ENCODE measurements at regions of chr1 and their contacts with region 1.

Region 1: DNA sequence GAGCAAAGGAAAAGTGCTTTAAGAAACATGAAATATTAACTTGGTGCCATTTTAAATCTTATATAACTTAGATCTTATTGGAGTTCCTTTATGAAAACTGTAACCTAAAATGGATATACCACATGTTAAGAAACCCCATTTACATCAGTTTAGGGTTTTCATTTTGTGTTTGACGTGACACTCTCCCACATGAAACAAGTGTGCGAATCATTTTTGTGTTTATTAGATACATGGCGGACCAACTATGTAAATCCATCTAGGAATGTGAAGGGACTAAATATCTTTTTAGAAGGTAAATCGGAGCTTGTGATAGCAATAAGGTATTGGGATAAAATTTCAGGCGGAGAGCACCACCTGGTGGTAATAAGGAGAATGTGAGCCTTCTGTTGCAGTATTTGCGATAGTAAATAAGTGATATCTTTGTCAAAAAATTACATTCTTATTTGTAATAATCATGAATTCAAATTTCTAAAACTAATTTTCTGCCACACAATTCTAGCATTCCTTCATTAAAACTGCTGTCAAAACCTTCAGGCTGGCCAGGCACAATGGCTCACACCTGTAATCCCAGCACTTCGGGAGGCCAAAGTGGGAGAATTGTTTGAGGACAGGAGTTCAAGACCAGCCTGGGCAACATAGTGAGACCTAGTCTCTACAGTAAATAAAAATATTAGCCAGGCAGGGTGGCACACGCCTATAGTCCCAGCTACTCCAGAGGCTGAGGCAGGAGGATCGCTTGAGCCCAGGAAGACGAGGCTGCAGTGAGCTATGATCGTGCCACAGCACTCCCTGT is 31.3 kb downstream of the SMAP2 start:
- DNase-seq: peak in 1 of 2 donors; percentile 88
- ATAC-seq: peak; percentile 78 to 79 (median 79)
- H3K4me3 ChIP-seq: no peak overlapping the region
- H3K4me3 Mint-ChIP-seq: peak overlapping the region; percentile 55
- H3K27ac ChIP-seq: peak overlapping the region; percentile 23
- H3K27ac Mint-ChIP-seq: peak overlapping the region; percentile 84 to 89
- H3K4me1 ChIP-seq: peaks cover 41% of the 10 kb centered on the region
- H3K4me1 Mint-ChIP-seq: peaks cover 30 to 31% of the 10 kb centered on the region in 2 donors
- H3K27me3 ChIP-seq: no peaks in the 10 kb centered on the region
- H3K27me3 Mint-ChIP-seq: no peaks in the 10 kb centered on the region
- CTCF ChIP-seq: peak; percentile 92

Region 2: DNA sequence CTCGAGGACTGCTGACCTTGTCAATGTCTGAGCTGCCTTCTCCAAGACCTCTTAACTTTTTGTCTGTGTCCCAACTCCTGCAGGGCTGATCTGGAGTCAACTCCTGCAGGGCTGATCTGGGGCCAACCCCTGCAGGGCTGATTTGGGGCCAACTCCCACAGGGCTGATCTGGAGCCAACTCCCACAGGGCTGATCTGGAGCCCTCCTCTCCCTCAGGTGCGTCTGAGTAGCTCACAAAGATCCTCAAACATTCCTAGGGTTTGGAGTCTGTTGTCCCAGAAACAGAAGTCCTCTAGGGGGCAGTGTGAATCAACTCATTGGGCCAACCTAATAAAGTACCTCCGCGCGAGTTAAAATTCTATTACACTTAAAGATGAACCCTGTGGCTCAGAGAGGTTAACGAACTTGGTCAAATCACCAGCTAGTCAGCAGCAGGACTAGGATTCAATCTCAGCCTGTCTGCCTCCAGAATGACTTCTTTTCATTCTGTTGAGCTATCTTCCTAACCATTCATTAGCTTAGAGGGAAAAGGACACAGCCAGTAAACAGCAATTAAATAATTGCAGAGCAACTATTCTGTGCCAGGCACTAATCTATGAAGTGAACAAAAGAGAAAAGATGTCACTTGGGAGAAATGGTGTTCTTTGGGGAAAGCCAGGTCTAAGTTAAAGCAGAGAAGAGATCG is 260.8 kb before region 1 on chr1:
- intact Hi-C with region 1: loop called (anchors 2 kb)
- DNase-seq: peak in 1 of 2 donors; percentile 85
- ATAC-seq: peak; percentile 75 to 84 (median 82)
- H3K4me3 ChIP-seq: no peak overlapping the region
- H3K4me3 Mint-ChIP-seq: no peak overlapping the region
- H3K27ac ChIP-seq: no peak overlapping the region
- H3K27ac Mint-ChIP-seq: no peak overlapping the region
- H3K4me1 ChIP-seq: no peaks in the 10 kb centered on the region
- H3K4me1 Mint-ChIP-seq: peaks cover 4 to 6% of the 10 kb centered on the region in 2 donors
- H3K27me3 ChIP-seq: peaks cover 2% of the 10 kb centered on the region
- H3K27me3 Mint-ChIP-seq: peaks cover 35 to 50% of the 10 kb centered on the region in 2 donors
- CTCF ChIP-seq: peak; percentile 79

Region 3: GRCh38 chr1:40257688-40258444 is 147.0 kb before region 1 on chr1 and contains the start of gene ZMPSTE24:
- intact Hi-C with region 1: loop called (anchors 5 kb)
- DNase-seq: peak; percentile 90 to 98
- ATAC-seq: peak; percentile 95 to 99 (median 95)
- H3K4me3 ChIP-seq: peak within 1 kb of the TSS; percentile 99
- H3K4me3 Mint-ChIP-seq: peak within 1 kb of the TSS; percentile 98
- H3K27ac ChIP-seq: peak within 1 kb of the TSS; percentile 86
- H3K27ac Mint-ChIP-seq: peak within 1 kb of the TSS; percentile 98 to 100
- H3K4me1 ChIP-seq: peaks cover 19% of the 10 kb centered on the region
- H3K4me1 Mint-ChIP-seq: peaks cover 23 to 27% of the 10 kb centered on the region in 2 donors
- H3K27me3 ChIP-seq: no peaks in the 10 kb centered on the region
- H3K27me3 Mint-ChIP-seq: no peaks in the 10 kb centered on the region
- CTCF ChIP-seq: no peak
- total RNA-seq, gene ZMPSTE24: 15.3 to 19.5 (median 19.3) TPM

Region 4: GRCh38 chr1:40373338-40374283 is 31.3 kb before region 1 on chr1 and contains the start of gene SMAP2:
- intact Hi-C with region 1: loop called (anchors 5 kb)
- DNase-seq: peak; percentile 91 to 98
- ATAC-seq: peak; percentile 85 to 95 (median 91)
- H3K4me3 ChIP-seq: peak within 1 kb of the TSS; percentile 98
- H3K4me3 Mint-ChIP-seq: peak within 1 kb of the TSS; percentile 100
- H3K27ac ChIP-seq: peak within 1 kb of the TSS; percentile 93
- H3K27ac Mint-ChIP-seq: peak within 1 kb of the TSS; percentile 94 to 98
- H3K4me1 ChIP-seq: peaks cover 24% of the 10 kb centered on the region
- H3K4me1 Mint-ChIP-seq: peaks cover 36 to 56% of the 10 kb centered on the region in 2 donors
- H3K27me3 ChIP-seq: no peaks in the 10 kb centered on the region
- H3K27me3 Mint-ChIP-seq: no peaks in the 10 kb centered on the region
- CTCF ChIP-seq: no peak
- total RNA-seq, gene SMAP2: 95.0 to 136 (median 127) TPM

Measured in natural killer cell (primary cell).